ENCODE measurements at regions of chr15 and their contacts with region 1.

Region 1: DNA sequence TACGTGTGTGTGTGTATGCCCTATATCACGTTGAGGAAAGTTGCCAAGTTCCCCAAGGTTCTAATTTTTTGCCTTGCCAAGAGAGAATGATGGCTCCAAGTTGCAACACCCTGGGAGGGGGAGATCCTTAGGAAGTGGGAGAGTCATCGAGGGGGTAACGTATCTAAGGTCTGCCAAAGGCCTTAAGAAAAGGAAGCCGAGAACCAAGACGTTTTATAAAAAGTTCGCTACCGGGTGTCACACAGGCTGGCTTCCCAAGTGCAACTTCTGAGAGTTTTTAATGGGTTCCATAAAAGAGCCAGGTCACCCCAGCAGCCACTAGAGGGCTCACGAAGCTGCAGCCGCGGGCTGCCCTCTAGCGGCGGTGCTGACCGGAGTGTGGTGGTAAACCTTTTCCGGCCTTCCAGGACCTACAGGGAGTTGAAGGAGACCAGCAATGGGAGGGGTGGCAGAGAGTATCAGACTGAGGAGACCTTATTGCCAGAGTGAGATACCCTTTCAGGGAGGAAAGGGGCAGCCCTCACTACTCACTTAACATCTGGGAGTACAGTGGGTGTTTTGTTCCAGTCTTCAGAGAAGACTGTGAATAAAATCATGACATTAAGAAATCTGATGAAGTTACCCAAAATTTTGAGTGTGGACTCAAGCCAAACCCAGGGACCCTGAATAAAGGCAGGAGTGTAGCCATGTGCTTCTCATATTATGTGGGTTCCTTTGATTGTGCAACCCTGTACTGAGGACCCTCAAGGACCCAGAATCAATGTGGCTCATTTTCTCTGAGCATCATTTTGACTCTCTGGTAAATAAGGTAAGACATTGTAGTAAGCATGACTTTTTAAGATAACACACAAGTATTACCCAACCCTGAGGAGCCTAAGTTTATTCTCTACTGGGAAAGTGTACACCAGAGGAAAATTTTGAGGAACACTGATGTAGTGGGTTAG is 2.5 kb upstream of the RFX7 start:
- DNase-seq: peak; percentile 72 to 92 (median 88)
- ATAC-seq: peak; percentile 74
- H3K4me3 ChIP-seq: peak overlapping the region; percentile 66 to 76
- H3K4me3 Mint-ChIP-seq: peak overlapping the region; percentile 92
- H3K27ac ChIP-seq: peak overlapping the region; percentile 33 to 69
- H3K27ac Mint-ChIP-seq: peak overlapping the region; percentile 95
- H3K4me1 ChIP-seq: peaks cover 28% of the 10 kb centered on the region
- H3K4me1 Mint-ChIP-seq: peaks cover 36% of the 10 kb centered on the region
- H3K27me3 ChIP-seq: no peaks in the 10 kb centered on the region
- H3K27me3 Mint-ChIP-seq: no peaks in the 10 kb centered on the region
- CTCF ChIP-seq: peak; percentile 100

Region 2: GRCh38 chr15:55196458-55197361 is 1049.4 kb before region 1 on chr15 and contains the start of gene RSL24D1:
- CTCF ChIA-PET with region 1: no interaction called
- POLR2A ChIA-PET with region 1: interaction called, 5 read pairs
- intact Hi-C with region 1: loop called in 1 of 2 experiments (anchors 10 kb)
- DNase-seq: peak; percentile 92 to 100 (median 96)
- ATAC-seq: peak; percentile 95
- H3K4me3 ChIP-seq: peak within 1 kb of the TSS; percentile 82 to 90
- H3K4me3 Mint-ChIP-seq: no peak within 1 kb of the TSS
- H3K27ac ChIP-seq: peak within 1 kb of the TSS; percentile 94
- H3K27ac Mint-ChIP-seq: no peak within 1 kb of the TSS
- H3K4me1 ChIP-seq: peaks cover 37% of the 10 kb centered on the region
- H3K4me1 Mint-ChIP-seq: peaks cover 21% of the 10 kb centered on the region
- H3K27me3 ChIP-seq: no peaks in the 10 kb centered on the region
- H3K27me3 Mint-ChIP-seq: no peaks in the 10 kb centered on the region
- CTCF ChIP-seq: no peak
- total RNA-seq, gene RSL24D1: 181 to 186 TPM

Region 3: DNA sequence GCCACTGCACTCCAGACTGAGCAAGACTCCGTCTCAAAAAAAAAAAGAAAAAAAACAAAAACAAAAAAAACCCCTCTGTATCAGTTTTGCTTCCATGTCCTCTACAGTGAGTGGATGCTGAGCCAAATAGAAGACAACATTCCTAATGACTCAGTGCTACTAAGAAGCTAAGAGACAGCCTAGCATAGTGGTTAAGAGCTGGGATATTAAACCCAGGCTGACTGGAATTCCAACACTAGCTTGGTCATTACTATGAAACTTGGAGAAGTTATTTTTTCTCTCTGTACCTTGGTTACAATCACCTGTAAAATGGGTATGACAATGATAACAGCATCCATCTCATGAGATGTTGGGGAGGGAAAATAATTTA is 597.1 kb before region 1 on chr15:
- CTCF ChIA-PET with region 1: interaction called, 4 read pairs
- POLR2A ChIA-PET with region 1: no interaction called
- intact Hi-C with region 1: loop called (anchors 5 kb)
- DNase-seq: no peak
- ATAC-seq: no peak
- H3K4me3 ChIP-seq: no peak overlapping the region
- H3K4me3 Mint-ChIP-seq: no peak overlapping the region
- H3K27ac ChIP-seq: no peak overlapping the region
- H3K27ac Mint-ChIP-seq: no peak overlapping the region
- H3K4me1 ChIP-seq: no peaks in the 10 kb centered on the region
- H3K4me1 Mint-ChIP-seq: no peaks in the 10 kb centered on the region
- H3K27me3 ChIP-seq: no peaks in the 10 kb centered on the region
- H3K27me3 Mint-ChIP-seq: peaks cover 2% of the 10 kb centered on the region
- CTCF ChIP-seq: no peak

Region 4: DNA sequence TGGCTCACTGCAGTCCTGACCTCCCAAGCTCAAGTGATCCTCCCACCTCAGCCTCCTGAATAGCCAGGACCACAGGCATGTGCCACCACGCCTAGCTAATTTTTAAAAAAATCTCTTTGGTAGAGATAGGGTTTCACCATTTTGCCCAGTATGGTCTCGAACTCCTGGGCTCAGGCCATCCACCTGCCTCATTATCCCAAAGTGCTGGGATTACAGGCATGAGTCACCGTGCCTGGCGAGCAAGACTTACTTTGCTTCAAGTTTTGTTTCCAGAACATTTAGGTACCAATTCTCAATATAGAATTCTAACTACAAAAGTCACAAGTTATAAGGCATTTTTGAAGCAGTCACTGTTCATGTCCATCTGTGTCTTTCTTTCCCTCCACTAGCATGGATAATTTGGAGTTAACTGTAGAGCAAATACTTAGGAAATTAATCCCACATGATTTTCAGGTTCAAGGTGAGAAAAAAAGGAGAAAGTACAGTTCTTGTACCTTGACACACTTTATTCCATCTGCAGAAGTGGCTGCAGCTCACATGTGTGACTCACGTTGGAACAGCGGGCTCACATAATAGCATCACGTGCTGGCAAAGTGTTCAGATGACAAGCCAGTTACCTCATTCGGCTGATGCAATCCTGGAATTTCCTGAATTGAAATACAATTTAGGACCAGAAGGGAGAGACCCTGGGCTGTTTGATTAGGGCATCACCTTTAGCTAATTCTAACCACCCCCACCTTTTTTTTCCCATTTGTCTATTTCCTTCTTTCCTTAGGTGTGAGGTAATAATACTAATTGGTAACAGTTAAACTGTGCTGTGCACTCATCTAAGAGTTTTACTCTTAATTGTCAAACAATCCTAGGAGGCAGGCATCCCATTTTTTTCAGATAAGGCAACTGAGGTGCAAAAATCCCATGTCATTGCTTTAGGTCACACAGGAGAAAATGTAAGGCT is 205.8 kb before region 1 on chr15:
- CTCF ChIA-PET with region 1: no interaction called
- POLR2A ChIA-PET with region 1: no interaction called
- intact Hi-C with region 1: loop called (anchors 2 kb)
- DNase-seq: peak in 2 of 9 experiments; percentile 24 to 31
- ATAC-seq: no peak
- H3K4me3 ChIP-seq: no peak overlapping the region
- H3K4me3 Mint-ChIP-seq: no peak overlapping the region
- H3K27ac ChIP-seq: no peak overlapping the region
- H3K27ac Mint-ChIP-seq: no peak overlapping the region
- H3K4me1 ChIP-seq: peaks cover 38% of the 10 kb centered on the region
- H3K4me1 Mint-ChIP-seq: peaks cover 45% of the 10 kb centered on the region
- H3K27me3 ChIP-seq: no peaks in the 10 kb centered on the region
- H3K27me3 Mint-ChIP-seq: no peaks in the 10 kb centered on the region
- CTCF ChIP-seq: no peak

Region 5: GRCh38 chr15:56211960-56212550 is 34.1 kb before region 1 on chr15:
- CTCF ChIA-PET with region 1: interaction called, 8 read pairs
- POLR2A ChIA-PET with region 1: no interaction called
- intact Hi-C with region 1: loop called (anchors 2 to 5 kb)
- DNase-seq: no peak
- ATAC-seq: no peak
- H3K4me3 ChIP-seq: no peak overlapping the region
- H3K4me3 Mint-ChIP-seq: no peak overlapping the region
- H3K27ac ChIP-seq: no peak overlapping the region
- H3K27ac Mint-ChIP-seq: peak overlapping the region; percentile 8
- H3K4me1 ChIP-seq: peaks cover 25% of the 10 kb centered on the region
- H3K4me1 Mint-ChIP-seq: peaks cover 56% of the 10 kb centered on the region
- H3K27me3 ChIP-seq: no peaks in the 10 kb centered on the region
- H3K27me3 Mint-ChIP-seq: no peaks in the 10 kb centered on the region
- CTCF ChIP-seq: no peak

Region 6: DNA sequence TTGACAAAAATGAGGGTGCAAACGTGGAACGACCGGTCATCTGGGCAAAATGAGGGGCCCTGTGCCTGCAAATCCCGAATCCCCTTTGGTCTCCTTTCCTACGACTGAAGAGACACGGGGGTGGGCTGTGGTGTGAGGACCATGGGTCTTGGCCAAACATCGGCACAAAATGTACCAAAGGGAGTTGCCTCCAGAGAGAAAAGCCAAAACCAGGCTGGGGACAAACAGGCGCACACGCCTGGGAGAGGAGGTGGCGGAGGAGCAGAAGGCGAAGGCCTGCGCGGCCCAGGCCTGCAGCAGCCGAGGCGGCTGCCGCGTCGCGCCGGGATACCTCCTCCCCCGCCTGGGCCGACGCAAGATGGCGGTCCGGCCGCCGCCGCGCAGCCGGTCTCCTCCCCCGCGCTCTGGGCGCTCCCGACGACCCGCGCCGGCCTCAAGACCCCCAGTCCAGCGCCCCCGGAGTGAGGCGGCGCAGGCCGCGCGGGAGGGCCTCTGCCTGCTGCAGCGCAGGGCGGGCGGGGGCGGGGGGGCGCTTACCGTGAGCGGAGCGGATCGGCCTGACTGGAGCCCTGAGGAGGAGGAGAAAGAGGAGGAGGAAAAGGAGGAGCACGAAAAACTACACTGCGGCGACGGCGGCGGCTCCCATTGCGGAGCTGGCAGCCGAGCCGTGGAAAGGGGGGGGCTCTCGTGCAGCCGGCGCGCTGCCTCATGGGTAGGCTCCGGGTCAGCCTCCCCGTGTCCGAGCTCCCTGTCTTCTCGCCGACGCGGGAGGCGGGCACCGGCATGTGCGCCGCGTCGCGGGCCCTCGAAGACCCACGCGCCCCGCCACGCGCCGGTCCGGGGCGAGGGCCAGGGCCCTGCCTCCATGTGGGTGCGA is 487.0 kb after region 1 on chr15 and contains the start of gene ZNF280D:
- CTCF ChIA-PET with region 1: no interaction called
- POLR2A ChIA-PET with region 1: no interaction called
- intact Hi-C with region 1: loop called in 1 of 2 experiments (anchors 5 kb)
- DNase-seq: peak; percentile 56 to 88 (median 77)
- ATAC-seq: peak; percentile 84
- H3K4me3 ChIP-seq: peak within 1 kb of the TSS; percentile 73 to 76
- H3K4me3 Mint-ChIP-seq: peak within 1 kb of the TSS; percentile 89
- H3K27ac ChIP-seq: peak within 1 kb of the TSS; percentile 68 to 72
- H3K27ac Mint-ChIP-seq: peak within 1 kb of the TSS; percentile 95
- H3K4me1 ChIP-seq: peaks cover 23% of the 10 kb centered on the region
- H3K4me1 Mint-ChIP-seq: peaks cover 43% of the 10 kb centered on the region
- H3K27me3 ChIP-seq: no peaks in the 10 kb centered on the region
- H3K27me3 Mint-ChIP-seq: no peaks in the 10 kb centered on the region
- CTCF ChIP-seq: no peak
- total RNA-seq, gene ZNF280D: 19.6 to 27.4 TPM

Region 7: GRCh38 chr15:57706405-57707209 is 1460.5 kb after region 1 on chr15 and contains the start of gene POLR2M:
- CTCF ChIA-PET with region 1: no interaction called
- POLR2A ChIA-PET with region 1: interaction called, 3 read pairs
- intact Hi-C with region 1: loop called (anchors 5 to 10 kb)
- DNase-seq: peak; percentile 81 to 98 (median 89)
- ATAC-seq: peak; percentile 87
- H3K4me3 ChIP-seq: peak within 1 kb of the TSS; percentile 85 to 87
- H3K4me3 Mint-ChIP-seq: peak within 1 kb of the TSS; percentile 87
- H3K27ac ChIP-seq: peak within 1 kb of the TSS; percentile 89 to 98
- H3K27ac Mint-ChIP-seq: peak within 1 kb of the TSS; percentile 92
- H3K4me1 ChIP-seq: peaks cover 56% of the 10 kb centered on the region
- H3K4me1 Mint-ChIP-seq: peaks cover 74% of the 10 kb centered on the region
- H3K27me3 ChIP-seq: no peaks in the 10 kb centered on the region
- H3K27me3 Mint-ChIP-seq: no peaks in the 10 kb centered on the region
- CTCF ChIP-seq: no peak
- total RNA-seq, gene POLR2M: 96.7 to 103 TPM

Measured in CD8-positive, alpha-beta T cell (primary cell).